ENCODE measurements at regions of chr6 and their contacts with region 1.

Region 1: GRCh38 chr6:87929843-87930288 is 117.8 kb upstream of the SPACA1 start:
- H3K4me3 ChIP-seq: no peak overlapping the region
- H3K27ac ChIP-seq: no peak overlapping the region
- H3K4me1 ChIP-seq: no peaks in the 10 kb centered on the region
- CTCF ChIP-seq: peak; percentile 86

Region 2: GRCh38 chr6:87832025-87832825 is 97.6 kb before region 1 on chr6:
- CTCF ChIA-PET with region 1: interaction called, 20 read pairs
- POLR2A ChIA-PET with region 1: no interaction called
- H3K4me3 ChIP-seq: peak overlapping the region; percentile 26
- H3K27ac ChIP-seq: 0 out of 2 replicates have a peak overlapping the region, but pooled peaks have one; percentile 25
- H3K4me1 ChIP-seq: peaks cover 15% of the 10 kb centered on the region
- CTCF ChIP-seq: no peak

Region 3: DNA sequence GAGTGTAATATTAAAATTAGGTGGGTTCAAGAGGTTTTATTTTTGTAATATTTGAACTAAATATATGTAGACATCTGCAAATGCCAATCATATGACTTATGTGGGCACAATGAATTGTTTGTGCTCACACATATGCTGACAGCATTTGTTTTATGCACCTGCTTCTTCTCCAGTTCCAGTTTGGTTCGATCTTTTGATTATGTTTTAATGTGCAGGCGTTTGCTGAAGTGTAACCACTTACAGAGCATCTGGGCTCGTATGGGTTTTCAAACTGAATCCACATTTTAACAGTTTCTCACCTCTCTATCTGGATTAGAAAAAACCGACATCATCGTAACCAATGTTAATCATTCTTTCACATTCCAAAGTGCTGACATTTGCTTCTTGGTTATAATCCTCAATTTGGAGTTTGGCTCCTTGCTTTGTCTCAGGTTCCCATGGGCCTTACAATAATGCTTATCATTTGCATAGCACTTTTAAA is 11.4 kb before region 1 on chr6:
- CTCF ChIA-PET with region 1: interaction called, 12 read pairs
- POLR2A ChIA-PET with region 1: no interaction called
- H3K4me3 ChIP-seq: no peak overlapping the region
- H3K27ac ChIP-seq: no peak overlapping the region
- H3K4me1 ChIP-seq: no peaks in the 10 kb centered on the region
- CTCF ChIP-seq: no peak

Region 4: DNA sequence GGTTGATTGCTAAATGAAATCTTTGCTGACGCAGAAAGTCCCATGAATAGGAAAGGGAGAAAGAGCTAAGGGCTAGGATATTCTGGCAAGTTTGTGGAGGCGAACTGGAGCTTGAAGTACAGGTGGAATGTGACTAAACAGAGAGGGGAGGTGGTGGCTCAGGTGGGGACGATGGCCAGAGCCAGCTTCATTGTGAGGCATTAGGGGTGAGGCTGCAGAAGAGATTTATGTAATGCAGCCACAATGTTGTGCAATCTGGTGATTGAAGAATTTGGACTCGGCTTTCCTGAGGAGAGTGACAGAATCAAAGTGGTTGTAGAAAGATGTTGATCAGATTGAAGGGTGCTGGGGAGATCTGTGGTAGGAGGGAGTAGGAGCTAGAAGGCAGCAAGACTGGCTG is 74.8 kb after region 1 on chr6:
- CTCF ChIA-PET with region 1: no interaction called
- POLR2A ChIA-PET with region 1: no interaction called
- H3K4me3 ChIP-seq: no peak overlapping the region
- H3K27ac ChIP-seq: no peak overlapping the region
- H3K4me1 ChIP-seq: no peaks in the 10 kb centered on the region
- CTCF ChIP-seq: no peak

Region 5: DNA sequence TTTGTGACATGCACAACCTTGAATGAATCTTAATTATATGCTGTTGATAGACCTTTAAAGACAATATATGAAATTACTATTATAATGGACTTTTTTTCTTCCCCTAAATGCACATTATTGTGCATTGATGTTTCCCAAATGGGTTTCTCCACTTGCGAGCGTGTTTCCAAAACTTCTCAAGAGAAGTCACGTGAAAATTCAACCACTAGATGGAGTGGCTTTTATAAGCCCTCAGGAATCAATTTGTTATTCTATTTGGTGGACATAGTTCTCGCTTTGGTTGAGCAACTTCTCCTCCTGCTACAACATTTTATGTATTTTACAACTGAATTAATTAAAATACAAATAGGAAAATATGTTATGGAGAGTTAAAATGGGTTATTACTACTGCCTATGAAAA is 227.2 kb after region 1 on chr6:
- CTCF ChIA-PET with region 1: no interaction called
- POLR2A ChIA-PET with region 1: no interaction called
- H3K4me3 ChIP-seq: no peak overlapping the region
- H3K27ac ChIP-seq: no peak overlapping the region
- H3K4me1 ChIP-seq: no peaks in the 10 kb centered on the region
- CTCF ChIP-seq: no peak

Region 6: DNA sequence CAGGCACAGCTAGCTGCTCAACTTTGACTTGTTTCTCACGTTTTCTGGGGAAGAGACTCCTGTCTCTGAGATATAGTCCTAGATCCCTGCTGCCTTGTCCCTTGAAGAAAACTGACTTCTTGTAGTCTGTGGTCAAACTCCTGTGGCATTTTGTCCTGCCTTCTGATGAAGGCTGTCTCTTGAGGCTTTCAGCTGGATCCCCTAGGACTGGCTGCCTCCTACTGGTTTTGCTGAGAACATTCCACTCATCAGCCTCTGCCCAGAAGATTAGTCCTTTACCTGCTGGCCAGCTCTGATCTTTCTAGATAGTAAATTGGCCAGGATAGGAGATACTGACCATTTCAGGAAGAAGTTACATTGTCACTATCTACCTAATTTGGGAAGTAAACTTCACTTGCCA is 308.2 kb after region 1 on chr6:
- CTCF ChIA-PET with region 1: interaction called, 19 read pairs
- POLR2A ChIA-PET with region 1: no interaction called
- H3K4me3 ChIP-seq: no peak overlapping the region
- H3K27ac ChIP-seq: no peak overlapping the region
- H3K4me1 ChIP-seq: no peaks in the 10 kb centered on the region
- CTCF ChIP-seq: no peak

Region 7: GRCh38 chr6:88870717-88871330 is 941.0 kb after region 1 on chr6:
- CTCF ChIA-PET with region 1: interaction called, 56 read pairs
- POLR2A ChIA-PET with region 1: no interaction called
- H3K4me3 ChIP-seq: no peak overlapping the region
- H3K27ac ChIP-seq: no peak overlapping the region
- H3K4me1 ChIP-seq: peaks cover 20% of the 10 kb centered on the region
- CTCF ChIP-seq: no peak